BJ (cell line): ENCODE measurements at regions of chr2 and their contacts with region 1.

Region 1: DNA sequence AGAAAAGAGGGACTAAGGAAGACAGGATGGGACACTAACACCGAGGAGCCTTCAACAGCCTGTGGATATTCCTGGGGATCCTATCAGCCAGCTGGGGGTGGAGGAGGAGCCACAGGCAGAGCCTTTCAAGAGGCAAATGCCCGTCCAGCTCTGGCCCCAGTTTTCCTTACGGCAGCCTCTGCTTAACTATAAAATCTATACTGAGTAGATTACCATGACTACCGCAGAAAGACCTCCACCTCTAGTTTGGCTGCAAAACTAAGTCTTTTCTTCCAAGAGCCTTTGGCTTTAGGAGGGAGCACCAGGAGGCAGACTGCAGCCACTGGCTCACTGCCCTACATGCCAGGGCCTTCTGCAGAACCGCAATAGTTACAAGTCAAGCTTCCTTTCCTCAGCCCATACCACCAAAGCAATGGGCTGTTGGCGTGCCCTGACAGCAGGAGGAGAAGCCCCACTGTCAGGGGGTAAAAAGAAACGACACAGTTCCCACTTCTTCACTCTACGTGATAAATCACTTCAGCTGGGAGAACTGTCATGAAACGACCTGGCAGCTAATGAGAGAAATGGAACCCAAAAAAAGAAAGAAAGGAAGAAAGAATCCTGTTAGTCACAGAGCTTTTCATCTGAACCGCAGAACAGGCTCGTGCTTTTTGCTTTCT is 25.1 kb upstream of the CREB1 start:
- DNase-seq: no peak
- H3K4me3 ChIP-seq: no peak overlapping the region
- H3K27me3 ChIP-seq: no peaks in the 10 kb centered on the region
- CTCF ChIP-seq: peak; percentile 36

Region 2: DNA sequence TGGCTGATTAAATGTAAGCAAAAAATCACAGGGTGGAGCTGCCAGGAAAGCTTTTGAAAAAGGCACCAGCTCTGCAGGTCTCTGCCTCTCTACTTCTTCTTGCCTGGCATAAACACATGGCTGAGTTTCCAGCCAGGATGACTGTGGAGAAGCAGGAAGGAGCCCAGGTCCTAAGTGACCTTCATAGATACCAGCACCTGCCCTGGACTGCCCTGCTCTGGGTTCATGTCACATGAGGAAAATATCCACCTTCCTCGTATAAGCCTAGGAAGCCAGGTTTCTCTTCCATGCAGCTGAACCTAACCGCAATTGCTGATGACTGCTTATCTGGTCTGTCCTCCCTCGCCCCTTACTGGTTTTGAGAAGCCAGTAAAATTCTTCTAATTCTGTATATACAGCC is 22.7 kb before region 1 on chr2:
- CTCF ChIA-PET with region 1: no interaction called
- POLR2A ChIA-PET with region 1: no interaction called
- DNase-seq: no peak
- H3K4me3 ChIP-seq: no peak overlapping the region
- H3K27me3 ChIP-seq: no peaks in the 10 kb centered on the region
- CTCF ChIP-seq: no peak

Region 3: DNA sequence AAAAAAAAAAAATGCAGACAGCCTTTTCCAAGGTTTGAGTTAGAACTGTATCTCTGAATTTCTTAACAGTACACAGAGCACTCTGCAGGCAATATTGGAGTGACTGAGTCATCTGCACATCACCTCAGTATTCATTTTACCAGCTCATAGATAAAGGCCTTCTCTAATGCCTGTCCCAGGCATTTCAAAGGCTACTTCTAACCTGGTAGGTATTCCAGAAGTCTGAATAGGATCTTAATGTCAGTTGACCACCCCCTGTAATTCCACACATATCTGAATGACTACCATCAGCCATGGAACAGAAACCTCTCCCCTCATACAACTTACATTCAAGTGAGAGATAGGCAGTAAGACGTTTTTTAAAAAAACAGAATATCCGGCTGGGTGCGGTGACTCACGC is 111.5 kb after region 1 on chr2:
- CTCF ChIA-PET with region 1: no interaction called
- POLR2A ChIA-PET with region 1: interaction called, 10 read pairs
- DNase-seq: no peak
- H3K4me3 ChIP-seq: no peak overlapping the region
- H3K27me3 ChIP-seq: no peaks in the 10 kb centered on the region
- CTCF ChIP-seq: no peak